ENCODE measurements at regions of chr2 and their contacts with region 1.

Region 1: DNA sequence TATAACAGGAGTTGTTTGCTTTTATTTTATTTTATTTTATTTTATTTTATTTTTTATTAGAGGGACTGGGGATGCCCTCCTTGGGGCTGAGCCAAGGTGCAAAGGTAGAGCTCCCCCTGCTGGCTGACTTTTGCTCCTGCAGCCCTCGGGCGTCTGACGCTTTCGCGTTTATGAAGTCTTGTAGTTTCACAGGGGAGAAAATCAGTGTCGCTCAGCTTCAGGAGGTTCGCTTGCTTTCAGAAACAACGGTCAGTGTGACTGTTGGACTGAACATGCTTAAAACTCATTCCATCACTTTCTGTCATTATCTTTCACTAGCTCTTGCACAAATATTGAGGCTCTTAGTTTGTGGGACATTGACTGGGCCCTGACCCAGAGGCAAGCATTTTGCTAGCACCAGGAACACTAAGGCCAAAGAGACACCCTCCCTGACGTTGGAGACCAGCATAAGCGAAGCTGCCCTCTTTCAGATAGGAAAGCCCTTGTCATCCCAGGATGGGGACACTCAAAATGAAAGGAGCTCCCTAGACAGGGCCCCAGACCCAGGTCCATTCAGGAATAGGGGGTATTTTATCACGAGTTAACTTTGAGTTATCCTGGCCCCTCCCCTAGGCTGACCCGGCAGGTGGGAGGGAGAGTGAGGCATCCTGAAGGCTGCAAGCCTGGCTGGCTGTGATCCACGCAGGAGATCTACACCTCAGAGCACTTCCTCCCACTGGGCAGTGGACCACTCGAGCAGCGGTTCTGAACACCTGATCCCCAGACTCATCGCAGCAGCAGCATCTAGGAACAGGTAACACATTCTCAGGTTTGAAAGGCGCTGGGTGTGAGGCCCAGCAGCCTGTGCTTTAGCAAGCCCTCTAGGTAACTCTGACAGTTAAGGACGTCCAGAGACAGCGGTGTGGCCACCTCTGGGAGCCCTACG is 34.4 kb downstream of the LGALSL start:
- DNase-seq: peak; percentile 77
- H3K4me3 ChIP-seq: no peak overlapping the region
- H3K27ac ChIP-seq: no peak overlapping the region
- H3K4me1 ChIP-seq: no peaks in the 10 kb centered on the region
- H3K27me3 ChIP-seq: no peaks in the 10 kb centered on the region
- CTCF ChIP-seq: peak; percentile 74 to 97 (median 77)
- POLR2A ChIP-seq: no peak

Region 2: GRCh38 chr2:64330281-64331113 is 157.8 kb before region 1 on chr2:
- intact Hi-C with region 1: loop called (anchors 10 kb)
- DNase-seq: peak; percentile 91
- H3K4me3 ChIP-seq: no peak overlapping the region
- H3K27ac ChIP-seq: peak overlapping the region in 1 of 2 donors; percentile 44
- H3K4me1 ChIP-seq: peaks cover 9% of the 10 kb centered on the region
- H3K27me3 ChIP-seq: no peaks in the 10 kb centered on the region
- CTCF ChIP-seq: peak; percentile 94 to 95 (median 94)
- POLR2A ChIP-seq: no peak

Region 3: GRCh38 chr2:64426183-64426952 is 61.9 kb before region 1 on chr2:
- intact Hi-C with region 1: no loop called
- DNase-seq: no peak
- H3K4me3 ChIP-seq: no peak overlapping the region
- H3K27ac ChIP-seq: no peak overlapping the region
- H3K4me1 ChIP-seq: no peaks in the 10 kb centered on the region
- H3K27me3 ChIP-seq: no peaks in the 10 kb centered on the region
- CTCF ChIP-seq: no peak
- POLR2A ChIP-seq: no peak